Body of pancreas (tissue), 4 donors: ENCODE measurements at regions of chr1 and their contacts with region 1.

Region 1: GRCh38 chr1:51189421-51190073 is 46.5 kb upstream of the RNF11 start:
- DNase-seq: peak; percentile 33 to 53 (median 48)
- ATAC-seq: peak; percentile 62
- H3K4me3 ChIP-seq: no peak overlapping the region
- H3K27ac ChIP-seq: no peak overlapping the region
- H3K4me1 ChIP-seq: no peaks in the 10 kb centered on the region
- H3K27me3 ChIP-seq: no peaks in the 10 kb centered on the region
- CTCF ChIP-seq: peak; percentile 52 to 92 (median 85)
- POLR2A ChIP-seq: no peak

Region 2: DNA sequence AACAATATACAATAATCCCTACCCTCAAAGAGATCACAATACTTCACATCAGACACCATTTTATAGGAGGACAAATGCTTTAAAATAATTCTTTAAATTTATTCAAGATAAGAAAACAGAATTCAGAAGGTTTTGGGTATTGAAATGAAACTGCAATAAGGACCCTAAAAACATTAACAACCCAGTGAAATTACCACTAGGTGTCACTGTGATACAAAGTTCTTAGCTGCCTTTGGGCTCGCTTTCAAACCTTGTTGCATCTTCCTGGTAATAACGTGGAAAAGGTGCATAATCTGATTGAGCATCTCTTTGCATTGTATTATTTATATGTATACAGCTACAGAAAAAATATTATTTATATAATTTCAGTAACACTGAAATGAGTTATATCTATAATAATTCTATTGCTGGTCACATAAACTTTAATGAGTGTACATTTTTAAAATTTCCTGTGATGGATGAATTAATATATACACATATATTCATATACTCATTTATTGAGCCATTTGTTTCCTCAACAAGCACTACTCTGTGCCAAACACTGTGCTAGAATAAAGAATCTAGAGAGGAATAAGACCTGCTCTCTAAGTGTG is 414.7 kb before region 1 on chr1:
- intact Hi-C with region 1: loop called (anchors 10 kb)
- DNase-seq: peak in 2 of 4 donors; percentile 21 to 27
- ATAC-seq: no peak
- H3K4me3 ChIP-seq: no peak overlapping the region
- H3K27ac ChIP-seq: no peak overlapping the region
- H3K4me1 ChIP-seq: no peaks in the 10 kb centered on the region
- H3K27me3 ChIP-seq: no peaks in the 10 kb centered on the region
- CTCF ChIP-seq: peak; percentile 47 to 82 (median 63)
- POLR2A ChIP-seq: no peak

Region 3: DNA sequence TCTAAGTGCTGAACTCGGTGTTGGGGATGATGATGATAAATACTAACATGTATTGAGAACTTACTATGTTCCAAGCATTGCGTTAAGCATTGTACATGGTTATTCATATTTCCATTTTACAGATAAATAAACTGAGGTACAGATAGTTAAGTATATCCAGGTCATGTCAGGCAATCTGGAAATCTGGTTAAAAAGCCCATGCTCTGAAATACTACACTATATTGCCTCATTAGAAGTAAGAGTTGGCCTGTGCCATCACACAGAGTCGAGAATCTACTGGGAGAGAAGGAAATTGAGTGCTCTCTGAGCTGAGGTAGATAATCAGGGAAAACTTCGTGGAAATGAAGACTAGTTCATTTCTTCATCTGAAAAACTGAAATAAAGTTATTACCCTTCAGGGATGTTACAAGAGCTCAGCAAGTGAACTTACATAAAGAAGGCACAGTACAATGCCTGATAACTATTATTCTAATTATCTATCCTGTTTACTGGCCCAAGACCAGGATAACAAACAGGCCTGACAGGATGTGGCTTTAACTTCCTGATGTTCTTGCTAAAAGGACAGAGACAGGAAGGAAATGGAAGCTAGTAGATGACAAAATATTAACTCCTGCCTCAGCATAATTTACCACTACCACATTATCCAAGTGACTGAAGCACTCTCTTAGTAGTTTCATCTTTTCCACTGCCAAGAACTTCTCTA is 243.9 kb after region 1 on chr1:
- intact Hi-C with region 1: no loop called
- DNase-seq: no peak
- ATAC-seq: no peak
- H3K4me3 ChIP-seq: no peak overlapping the region
- H3K27ac ChIP-seq: peak overlapping the region in 1 of 4 donors; percentile 41
- H3K4me1 ChIP-seq: no peaks in the 10 kb centered on the region
- H3K27me3 ChIP-seq: no peaks in the 10 kb centered on the region
- CTCF ChIP-seq: no peak
- POLR2A ChIP-seq: no peak